Activated T-helper 2 cell treated with anti-CD3 and anti-CD28 coated beads, Interferon-gamma antibody, Interleukin-2, Interleukin-4, amounts not matched to agents 10 μg/mL and 5 μg/mL and 100 μg/mL, durations not matched to agents 14 hours and 24 hours and 36 hours (primary cell): ENCODE measurements at regions of chr1 and their contacts with region 1.

Region 1: GRCh38 chr1:101238681-101239094 is 1.9 kb downstream of the S1PR1 start:
- DNase-seq: peak; percentile 80
- H3K4me3 Mint-ChIP-seq: peak overlapping the region; percentile 99
- H3K27ac Mint-ChIP-seq: peak overlapping the region; percentile 96
- H3K4me1 Mint-ChIP-seq: peaks cover 61% of the 10 kb centered on the region
- H3K27me3 Mint-ChIP-seq: no peaks in the 10 kb centered on the region

Region 2: GRCh38 chr1:100895540-100896483 is 342.9 kb before region 1 on chr1 and contains the start of gene SLC30A7:
- intact Hi-C with region 1: loop called (anchors 2 kb)
- DNase-seq: peak; percentile 92
- H3K4me3 Mint-ChIP-seq: peak within 1 kb of the TSS; percentile 95
- H3K27ac Mint-ChIP-seq: peak within 1 kb of the TSS; percentile 97
- H3K4me1 Mint-ChIP-seq: peaks cover 41% of the 10 kb centered on the region
- H3K27me3 Mint-ChIP-seq: no peaks in the 10 kb centered on the region
- total RNA-seq, gene SLC30A7: 38.6 and 39.4 TPM in 2 replicates

Region 3: GRCh38 chr1:101002551-101002950 is 236.1 kb before region 1 on chr1:
- intact Hi-C with region 1: loop called (anchors 1 kb)
- DNase-seq: no peak
- H3K4me3 Mint-ChIP-seq: no peak overlapping the region
- H3K27ac Mint-ChIP-seq: no peak overlapping the region
- H3K4me1 Mint-ChIP-seq: peaks cover 32% of the 10 kb centered on the region
- H3K27me3 Mint-ChIP-seq: no peaks in the 10 kb centered on the region

Region 4: GRCh38 chr1:101081496-101082488 is 156.9 kb before region 1 on chr1:
- intact Hi-C with region 1: loop called (anchors 2 kb)
- DNase-seq: peak; percentile 64
- H3K4me3 Mint-ChIP-seq: peak overlapping the region; percentile 0
- H3K27ac Mint-ChIP-seq: peak overlapping the region; percentile 67
- H3K4me1 Mint-ChIP-seq: peaks cover 51% of the 10 kb centered on the region
- H3K27me3 Mint-ChIP-seq: no peaks in the 10 kb centered on the region

Region 5: GRCh38 chr1:101136739-101137138 is 101.9 kb before region 1 on chr1:
- intact Hi-C with region 1: loop called (anchors 1 kb)
- DNase-seq: no peak
- H3K4me3 Mint-ChIP-seq: peak overlapping the region; percentile 47
- H3K27ac Mint-ChIP-seq: peak overlapping the region; percentile 89
- H3K4me1 Mint-ChIP-seq: peaks cover 67% of the 10 kb centered on the region
- H3K27me3 Mint-ChIP-seq: no peaks in the 10 kb centered on the region

Region 6: DNA sequence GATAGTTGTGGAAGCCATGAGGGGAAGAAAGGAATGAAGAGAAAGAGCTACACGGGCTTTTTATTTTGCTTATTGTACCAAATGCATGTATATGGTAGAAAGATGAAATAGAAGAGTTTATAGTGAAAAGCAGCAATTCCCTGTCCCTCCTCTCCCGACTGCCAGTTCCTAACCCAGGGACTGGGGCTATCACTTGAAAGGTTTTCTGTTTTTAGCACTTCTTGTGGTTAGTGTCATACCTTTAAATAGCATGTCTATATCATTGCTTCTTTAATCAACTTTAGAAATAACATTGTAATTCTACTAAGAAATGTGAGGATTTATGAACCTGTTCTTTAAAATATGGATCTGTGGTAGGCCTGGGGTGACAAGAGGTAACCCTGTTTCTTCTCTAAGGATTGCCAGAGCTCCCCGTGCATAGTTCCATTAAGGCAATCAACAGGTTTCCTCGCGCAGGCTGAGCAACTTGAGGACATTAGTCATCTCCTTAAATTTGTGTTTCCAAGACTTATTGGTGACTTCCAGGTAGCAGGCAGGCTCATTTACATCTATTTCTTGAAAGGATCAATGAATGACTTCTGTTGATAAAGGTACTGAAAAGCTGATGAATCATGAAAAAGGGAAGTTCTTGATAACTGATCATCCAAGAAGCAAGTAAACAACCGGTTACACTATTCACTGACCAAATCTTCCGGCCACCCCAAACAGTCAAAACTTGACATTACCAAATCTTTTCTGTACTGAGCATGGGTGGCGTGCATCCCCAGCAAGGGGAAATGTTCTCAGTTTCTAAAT is 39.6 kb before region 1 on chr1:
- intact Hi-C with region 1: loop called (anchors 1 kb)
- DNase-seq: peak; percentile 51
- H3K4me3 Mint-ChIP-seq: peak overlapping the region; percentile 7
- H3K27ac Mint-ChIP-seq: peak overlapping the region; percentile 85
- H3K4me1 Mint-ChIP-seq: peaks cover 40% of the 10 kb centered on the region
- H3K27me3 Mint-ChIP-seq: no peaks in the 10 kb centered on the region

Region 7: GRCh38 chr1:101221945-101222429 is 16.7 kb before region 1 on chr1:
- intact Hi-C with region 1: loop called (anchors 1 kb)
- DNase-seq: no peak
- H3K4me3 Mint-ChIP-seq: peak overlapping the region; percentile 66
- H3K27ac Mint-ChIP-seq: peak overlapping the region; percentile 81
- H3K4me1 Mint-ChIP-seq: peaks cover 32% of the 10 kb centered on the region
- H3K27me3 Mint-ChIP-seq: no peaks in the 10 kb centered on the region

Region 8: GRCh38 chr1:101463195-101463594 is 224.5 kb after region 1 on chr1:
- intact Hi-C with region 1: no loop called
- DNase-seq: no peak
- H3K4me3 Mint-ChIP-seq: no peak overlapping the region
- H3K27ac Mint-ChIP-seq: no peak overlapping the region
- H3K4me1 Mint-ChIP-seq: no peaks in the 10 kb centered on the region
- H3K27me3 Mint-ChIP-seq: peaks cover 11% of the 10 kb centered on the region